Endothelial cell of umbilical vein (primary cell): ENCODE measurements at regions of chr9 and their contacts with region 1.

Region 1: GRCh38 chr9:13427587-13427986 is 148.1 kb upstream of the MPDZ start:
- DNase-seq: peak; percentile 78
- H3K4me3 ChIP-seq: no peak overlapping the region
- H3K27ac ChIP-seq: peak overlapping the region; percentile 34
- H3K4me1 ChIP-seq: peaks cover 6% of the 10 kb centered on the region
- H3K27me3 ChIP-seq: no peaks in the 10 kb centered on the region
- CTCF ChIP-seq: peak; percentile 40 to 43
- POLR2A ChIP-seq: no peak

Region 2: GRCh38 chr9:13033959-13034693 is 393.5 kb before region 1 on chr9:
- CTCF ChIA-PET with region 1: interaction called, 11 read pairs
- POLR2A ChIA-PET with region 1: no interaction called
- dilution Hi-C with region 1: no loop called
- intact Hi-C with region 1: loop called (anchors 2 kb)
- DNase-seq: peak; percentile 75
- H3K4me3 ChIP-seq: no peak overlapping the region
- H3K27ac ChIP-seq: no peak overlapping the region
- H3K4me1 ChIP-seq: no peaks in the 10 kb centered on the region
- H3K27me3 ChIP-seq: no peaks in the 10 kb centered on the region
- CTCF ChIP-seq: peak; percentile 77 to 81
- POLR2A ChIP-seq: no peak

Region 3: GRCh38 chr9:13437866-13438265 is 10.3 kb after region 1 on chr9:
- CTCF ChIA-PET with region 1: interaction called, 16 read pairs
- POLR2A ChIA-PET with region 1: no interaction called
- dilution Hi-C with region 1: no loop called
- intact Hi-C with region 1: no loop called
- DNase-seq: no peak
- H3K4me3 ChIP-seq: no peak overlapping the region
- H3K27ac ChIP-seq: no peak overlapping the region
- H3K4me1 ChIP-seq: peaks cover 2% of the 10 kb centered on the region
- H3K27me3 ChIP-seq: no peaks in the 10 kb centered on the region
- CTCF ChIP-seq: no peak
- POLR2A ChIP-seq: no peak

Region 4: DNA sequence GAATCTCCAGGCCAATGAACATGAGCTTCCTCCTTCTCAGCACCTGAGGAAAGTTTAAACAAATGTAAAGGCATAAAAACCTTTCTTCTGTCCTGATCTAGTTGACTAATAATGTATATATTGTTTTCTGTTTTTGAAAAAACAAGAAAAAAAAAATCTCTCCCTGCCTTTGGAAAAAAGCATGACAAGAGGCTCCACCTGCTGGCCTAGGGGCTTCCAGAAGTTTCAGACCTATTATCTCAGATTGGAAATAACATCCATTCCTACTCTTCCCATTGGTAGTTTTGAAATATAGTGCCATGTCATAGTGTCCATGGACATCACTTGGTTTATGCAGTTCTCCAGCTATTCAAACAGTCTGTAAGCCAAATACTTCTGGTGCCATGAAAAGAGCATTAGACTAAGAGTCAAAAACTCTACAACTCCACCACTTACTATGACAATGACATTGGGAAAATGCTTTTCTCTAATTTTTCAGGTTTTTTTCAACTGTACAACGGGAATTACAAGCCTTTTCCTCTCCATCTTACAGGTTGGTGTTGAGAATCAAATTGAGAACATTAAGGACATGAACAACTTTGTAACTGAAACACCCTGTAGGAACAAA is 261.5 kb after region 1 on chr9:
- CTCF ChIA-PET with region 1: interaction called, 31 read pairs
- POLR2A ChIA-PET with region 1: interaction called, 4 read pairs
- dilution Hi-C with region 1: no loop called
- intact Hi-C with region 1: loop called (anchors 1 kb)
- DNase-seq: peak; percentile 67
- H3K4me3 ChIP-seq: no peak overlapping the region
- H3K27ac ChIP-seq: no peak overlapping the region
- H3K4me1 ChIP-seq: peaks cover 4% of the 10 kb centered on the region
- H3K27me3 ChIP-seq: no peaks in the 10 kb centered on the region
- CTCF ChIP-seq: peak; percentile 37 to 46
- POLR2A ChIP-seq: no peak

Region 5: DNA sequence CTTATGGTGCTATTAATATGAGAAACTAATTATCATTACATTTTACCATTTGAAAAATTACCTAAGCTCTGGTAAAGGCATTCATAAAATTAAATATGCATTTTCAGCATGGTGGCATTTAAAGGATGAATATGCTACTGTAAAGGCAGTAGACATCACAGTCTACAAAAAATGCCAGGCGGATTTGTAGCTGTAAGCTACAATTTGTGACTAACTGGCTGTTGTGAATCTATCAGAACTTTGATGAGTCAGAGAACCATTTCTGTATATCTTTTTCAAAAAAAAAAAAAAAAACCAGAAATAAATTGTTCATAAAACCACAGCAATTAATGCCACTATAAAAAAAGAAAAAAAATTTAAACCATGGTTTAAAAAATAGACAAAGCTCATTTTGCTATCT is 700.1 kb after region 1 on chr9:
- CTCF ChIA-PET with region 1: interaction called, 3 read pairs
- POLR2A ChIA-PET with region 1: interaction called, 10 read pairs
- dilution Hi-C with region 1: no loop called
- intact Hi-C with region 1: no loop called
- DNase-seq: no peak
- H3K4me3 ChIP-seq: no peak overlapping the region
- H3K27ac ChIP-seq: no peak overlapping the region
- H3K4me1 ChIP-seq: no peaks in the 10 kb centered on the region
- H3K27me3 ChIP-seq: no peaks in the 10 kb centered on the region
- CTCF ChIP-seq: no peak
- POLR2A ChIP-seq: no peak

Region 6: GRCh38 chr9:14322211-14323082 is 894.9 kb after region 1 on chr9:
- CTCF ChIA-PET with region 1: interaction called, 10 read pairs
- POLR2A ChIA-PET with region 1: no interaction called
- dilution Hi-C with region 1: no loop called
- intact Hi-C with region 1: no loop called
- DNase-seq: peak; percentile 93
- H3K4me3 ChIP-seq: peak overlapping the region; percentile 44 to 91 (median 79)
- H3K27ac ChIP-seq: peak overlapping the region; percentile 94
- H3K4me1 ChIP-seq: peaks cover 62% of the 10 kb centered on the region
- H3K27me3 ChIP-seq: no peaks in the 10 kb centered on the region
- CTCF ChIP-seq: peak in 1 of 2 donors; percentile 17
- POLR2A ChIP-seq: peak; percentile 59

Region 7: GRCh38 chr9:14400658-14400995 is 973.0 kb after region 1 on chr9:
- CTCF ChIA-PET with region 1: interaction called, 42 read pairs
- POLR2A ChIA-PET with region 1: no interaction called
- dilution Hi-C with region 1: no loop called
- intact Hi-C with region 1: loop called (anchors 1 kb)
- DNase-seq: peak; percentile 90
- H3K4me3 ChIP-seq: no peak overlapping the region
- H3K27ac ChIP-seq: peak overlapping the region; percentile 80
- H3K4me1 ChIP-seq: peaks cover 16% of the 10 kb centered on the region
- H3K27me3 ChIP-seq: no peaks in the 10 kb centered on the region
- CTCF ChIP-seq: peak; percentile 58
- POLR2A ChIP-seq: no peak